ENCODE measurements at regions of chr18 and their contacts with region 1.

Region 1: DNA sequence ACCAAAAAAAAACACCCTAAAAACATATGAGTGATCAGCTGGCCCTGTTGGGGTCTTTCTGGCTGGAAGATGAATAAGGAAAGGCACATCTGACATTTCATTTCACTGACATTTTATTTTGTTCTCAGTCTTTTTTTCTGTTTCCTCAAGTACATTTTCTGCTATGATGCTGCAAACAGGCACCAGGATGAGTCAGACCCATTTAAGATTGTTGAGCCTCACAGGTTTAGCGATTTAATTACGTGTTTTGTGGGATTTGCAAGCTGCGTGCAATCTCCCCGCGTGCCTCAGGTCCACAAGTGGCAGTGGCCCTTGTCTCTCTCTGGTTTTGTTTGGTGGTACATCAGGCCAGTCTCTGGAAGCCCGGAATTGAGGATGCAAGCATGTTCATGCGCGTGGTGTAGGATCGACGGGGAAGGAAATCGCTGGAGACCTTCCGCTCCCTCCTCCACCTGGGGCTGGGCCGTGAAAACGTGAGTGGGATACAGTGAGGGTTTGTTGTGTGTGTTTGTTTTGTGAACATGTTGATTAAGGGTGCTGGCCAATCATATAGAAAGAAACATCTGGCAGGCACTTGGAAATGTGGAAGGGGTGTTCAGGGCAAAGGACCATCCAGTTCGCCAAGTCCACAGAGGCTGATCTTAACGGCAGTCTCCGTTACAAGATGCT is 120.2 kb upstream of the ZNF516 start:
- DNase-seq: no peak
- H3K4me3 ChIP-seq: no peak overlapping the region
- H3K27ac ChIP-seq: no peak overlapping the region
- H3K4me1 ChIP-seq: no peaks in the 10 kb centered on the region
- H3K27me3 ChIP-seq: no peaks in the 10 kb centered on the region
- CTCF ChIP-seq: no peak
- POLR2A ChIP-seq: no peak

Region 2: GRCh38 chr18:76042511-76042910 is 572.7 kb before region 1 on chr18:
- intact Hi-C with region 1: no loop called
- DNase-seq: no peak
- H3K4me3 ChIP-seq: no peak overlapping the region
- H3K27ac ChIP-seq: no peak overlapping the region
- H3K4me1 ChIP-seq: no peaks in the 10 kb centered on the region
- H3K27me3 ChIP-seq: no peaks in the 10 kb centered on the region
- CTCF ChIP-seq: no peak
- POLR2A ChIP-seq: no peak

Region 3: DNA sequence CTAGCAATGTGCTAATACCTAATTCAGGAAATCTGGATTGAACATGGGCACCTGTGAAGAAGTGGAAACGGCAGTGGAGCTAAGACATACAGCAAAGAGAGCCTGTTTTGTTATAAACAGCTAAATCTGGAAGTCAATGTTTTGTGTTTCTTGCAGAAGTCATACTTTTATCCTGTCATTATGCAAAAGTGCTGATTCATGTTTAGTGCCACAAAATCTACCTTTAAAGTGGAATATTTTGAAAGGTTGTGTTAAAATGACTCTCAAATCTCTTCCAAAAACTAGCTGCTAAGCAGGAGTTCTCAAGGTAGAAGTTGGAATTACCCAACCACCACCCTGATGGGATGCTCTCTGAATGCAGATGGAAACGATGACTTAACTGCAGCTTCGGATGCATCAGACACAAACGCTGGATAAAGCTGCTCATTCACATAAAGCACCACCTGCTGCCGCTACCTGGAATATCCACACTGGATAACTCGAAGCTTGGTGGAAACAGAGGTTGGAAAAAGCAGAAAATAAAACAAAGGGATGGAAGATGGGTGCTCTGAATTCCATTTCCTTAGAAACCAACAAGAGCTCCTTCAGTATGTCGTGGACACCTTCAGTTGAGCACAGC is 74.6 kb after region 1 on chr18:
- intact Hi-C with region 1: loop called (anchors 2 kb)
- DNase-seq: no peak
- H3K4me3 ChIP-seq: no peak overlapping the region
- H3K27ac ChIP-seq: no peak overlapping the region
- H3K4me1 ChIP-seq: no peaks in the 10 kb centered on the region
- H3K27me3 ChIP-seq: peaks cover 0 to 20% of the 10 kb centered on the region in 2 donors
- CTCF ChIP-seq: no peak
- POLR2A ChIP-seq: no peak

Measured in breast epithelium (tissue), 4 donors.